CD4-positive, alpha-beta T cell (primary cell): ENCODE measurements at regions of chr18 and their contacts with region 1.

Region 1: GRCh38 chr18:76803814-76804213 is 18.5 kb upstream of the ZNF236 start:
- DNase-seq: peak; percentile 52 to 84 (median 68)
- ATAC-seq: peak; percentile 85
- H3K4me3 ChIP-seq: no peak overlapping the region
- H3K4me3 Mint-ChIP-seq: no peak overlapping the region
- H3K27ac ChIP-seq: no peak overlapping the region
- H3K27ac Mint-ChIP-seq: no peak overlapping the region
- H3K4me1 ChIP-seq: peaks cover 18% of the 10 kb centered on the region
- H3K4me1 Mint-ChIP-seq: peaks cover 15% of the 10 kb centered on the region
- H3K27me3 ChIP-seq: peaks cover 0 to 10% of the 10 kb centered on the region in 2 experiments
- H3K27me3 Mint-ChIP-seq: peaks cover 7% of the 10 kb centered on the region
- CTCF ChIP-seq: peak; percentile 87

Region 2: GRCh38 chr18:76398896-76399612 is 404.8 kb before region 1 on chr18:
- CTCF ChIA-PET with region 1: no interaction called
- POLR2A ChIA-PET with region 1: interaction called, 3 read pairs
- intact Hi-C with region 1: loop called in 1 of 2 experiments (anchors 5 kb)
- DNase-seq: peak; percentile 57 to 87 (median 72)
- ATAC-seq: peak; percentile 94
- H3K4me3 ChIP-seq: no peak overlapping the region
- H3K4me3 Mint-ChIP-seq: no peak overlapping the region
- H3K27ac ChIP-seq: no peak overlapping the region
- H3K27ac Mint-ChIP-seq: no peak overlapping the region
- H3K4me1 ChIP-seq: peaks cover 6% of the 10 kb centered on the region
- H3K4me1 Mint-ChIP-seq: peaks cover 26% of the 10 kb centered on the region
- H3K27me3 ChIP-seq: no peaks in the 10 kb centered on the region
- H3K27me3 Mint-ChIP-seq: no peaks in the 10 kb centered on the region
- CTCF ChIP-seq: peak; percentile 97

Region 3: DNA sequence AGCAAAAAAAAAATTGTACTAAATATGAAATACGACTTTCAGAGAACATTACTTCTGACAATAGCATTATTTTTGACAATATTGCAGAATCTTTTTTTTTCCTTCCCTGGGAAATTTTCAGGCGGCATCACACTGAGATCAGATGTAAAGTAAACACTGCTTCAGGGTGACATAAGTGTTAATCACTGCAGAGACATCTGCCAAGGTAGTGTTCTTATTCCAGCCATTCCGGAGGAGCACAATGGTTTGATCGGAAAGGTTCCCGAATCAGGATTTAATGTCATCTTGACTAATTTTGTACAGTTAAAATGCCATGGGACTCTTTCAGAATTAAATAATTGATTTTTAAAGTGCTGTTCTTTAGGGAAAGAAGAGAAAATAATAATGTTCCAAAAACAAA is 38.2 kb before region 1 on chr18:
- CTCF ChIA-PET with region 1: no interaction called
- POLR2A ChIA-PET with region 1: no interaction called
- intact Hi-C with region 1: no loop called
- DNase-seq: no peak
- ATAC-seq: no peak
- H3K4me3 ChIP-seq: no peak overlapping the region
- H3K4me3 Mint-ChIP-seq: no peak overlapping the region
- H3K27ac ChIP-seq: no peak overlapping the region
- H3K27ac Mint-ChIP-seq: no peak overlapping the region
- H3K4me1 ChIP-seq: peaks cover 13% of the 10 kb centered on the region
- H3K4me1 Mint-ChIP-seq: peaks cover 19% of the 10 kb centered on the region
- H3K27me3 ChIP-seq: peaks cover 0 to 4% of the 10 kb centered on the region in 2 experiments
- H3K27me3 Mint-ChIP-seq: peaks cover 5% of the 10 kb centered on the region
- CTCF ChIP-seq: no peak

Region 4: DNA sequence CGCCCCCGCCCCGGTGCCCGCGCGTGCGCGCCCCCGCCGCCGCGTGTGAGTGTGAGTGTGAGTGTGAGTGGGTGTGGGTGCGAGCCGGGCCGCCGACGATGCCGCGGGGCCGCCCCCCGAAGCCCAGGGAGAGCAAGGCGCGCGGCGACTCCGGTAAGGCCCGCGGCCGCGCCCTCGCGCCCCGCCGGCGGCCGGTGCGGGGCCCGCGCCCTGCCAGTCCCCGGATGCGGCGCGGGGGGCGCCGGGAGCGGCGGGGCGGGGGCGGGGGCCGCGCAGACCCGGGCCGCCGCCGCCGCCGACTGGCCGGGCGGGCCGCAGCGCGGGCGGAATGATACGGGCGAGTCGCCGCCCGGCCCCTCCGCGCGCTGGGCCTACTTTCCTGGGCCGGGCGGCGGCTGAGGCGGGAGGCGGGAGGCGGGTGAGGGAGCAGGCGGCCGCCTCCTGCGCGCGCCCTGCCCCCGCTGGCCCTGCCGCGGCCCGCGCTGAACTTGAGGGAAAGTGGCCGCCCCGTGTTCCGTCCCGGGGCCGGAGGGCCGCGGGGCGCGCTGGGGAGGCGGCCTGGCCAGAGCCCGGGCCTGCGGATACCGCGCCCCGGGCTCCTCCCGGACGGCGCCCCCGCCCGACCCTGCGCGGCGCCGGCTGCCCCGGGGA is 18.8 kb after region 1 on chr18 and contains the start of gene ZNF236:
- CTCF ChIA-PET with region 1: interaction called, 27 read pairs
- POLR2A ChIA-PET with region 1: interaction called, 12 read pairs
- intact Hi-C with region 1: loop called in 1 of 2 experiments (anchors 2 kb)
- DNase-seq: peak; percentile 39 to 88 (median 62)
- ATAC-seq: peak; percentile 43
- H3K4me3 ChIP-seq: peak within 1 kb of the TSS; percentile 97
- H3K4me3 Mint-ChIP-seq: peak within 1 kb of the TSS; percentile 96
- H3K27ac ChIP-seq: peak within 1 kb of the TSS; percentile 90 to 91
- H3K27ac Mint-ChIP-seq: peak within 1 kb of the TSS; percentile 96
- H3K4me1 ChIP-seq: peaks cover 47% of the 10 kb centered on the region
- H3K4me1 Mint-ChIP-seq: peaks cover 62% of the 10 kb centered on the region
- H3K27me3 ChIP-seq: no peaks in the 10 kb centered on the region
- H3K27me3 Mint-ChIP-seq: no peaks in the 10 kb centered on the region
- CTCF ChIP-seq: no peak
- total RNA-seq, gene ZNF236: 25.7 to 27.9 TPM

Region 5: GRCh38 chr18:76953583-76954233 is 149.9 kb after region 1 on chr18:
- CTCF ChIA-PET with region 1: no interaction called
- POLR2A ChIA-PET with region 1: no interaction called
- intact Hi-C with region 1: no loop called
- DNase-seq: no peak
- ATAC-seq: no peak
- H3K4me3 ChIP-seq: no peak overlapping the region
- H3K4me3 Mint-ChIP-seq: no peak overlapping the region
- H3K27ac ChIP-seq: no peak overlapping the region
- H3K27ac Mint-ChIP-seq: no peak overlapping the region
- H3K4me1 ChIP-seq: peaks cover 8% of the 10 kb centered on the region
- H3K4me1 Mint-ChIP-seq: peaks cover 10% of the 10 kb centered on the region
- H3K27me3 ChIP-seq: no peaks in the 10 kb centered on the region
- H3K27me3 Mint-ChIP-seq: no peaks in the 10 kb centered on the region
- CTCF ChIP-seq: no peak

Region 6: DNA sequence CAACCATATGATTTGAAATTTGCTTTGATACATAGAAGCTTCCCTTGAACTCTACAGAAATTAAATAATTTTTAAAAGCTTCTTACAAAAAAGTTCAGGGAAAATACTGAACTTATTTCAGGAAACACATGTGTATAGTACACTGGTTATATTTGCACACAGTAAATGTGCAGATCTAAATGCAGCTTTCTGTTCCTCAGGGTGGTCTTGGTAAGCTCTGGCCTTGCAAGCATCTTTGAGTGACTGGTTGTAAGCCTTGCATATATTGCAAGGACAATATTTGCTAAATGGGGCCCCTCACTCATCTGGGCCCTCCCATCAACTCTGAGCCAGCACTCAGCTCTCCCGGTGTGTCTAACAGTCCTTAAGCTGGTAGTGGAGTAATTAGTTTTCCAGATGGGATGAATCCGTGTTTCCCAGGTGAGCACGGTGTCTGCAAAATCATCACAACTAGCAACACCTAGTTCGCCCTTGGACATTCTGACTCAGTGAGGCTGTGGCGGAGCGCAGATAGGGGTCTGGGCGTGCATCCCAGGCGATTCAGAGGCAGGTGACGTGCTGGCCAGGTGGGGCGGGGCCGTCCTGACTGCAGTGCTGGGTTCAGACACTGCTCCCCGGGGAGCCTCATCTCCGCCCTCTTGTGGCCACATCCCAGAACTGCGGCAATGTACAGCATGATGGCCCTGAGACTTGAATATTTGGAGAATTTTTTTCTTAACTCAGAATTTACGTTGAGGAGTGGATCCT is 179.2 kb after region 1 on chr18:
- CTCF ChIA-PET with region 1: interaction called, 3 read pairs
- POLR2A ChIA-PET with region 1: interaction called, 4 read pairs
- intact Hi-C with region 1: loop called (anchors 2 kb)
- DNase-seq: peak; percentile 67 to 90 (median 82)
- ATAC-seq: peak; percentile 99
- H3K4me3 ChIP-seq: no peak overlapping the region
- H3K4me3 Mint-ChIP-seq: no peak overlapping the region
- H3K27ac ChIP-seq: no peak overlapping the region
- H3K27ac Mint-ChIP-seq: no peak overlapping the region
- H3K4me1 ChIP-seq: peaks cover 9% of the 10 kb centered on the region
- H3K4me1 Mint-ChIP-seq: no peaks in the 10 kb centered on the region
- H3K27me3 ChIP-seq: no peaks in the 10 kb centered on the region
- H3K27me3 Mint-ChIP-seq: no peaks in the 10 kb centered on the region
- CTCF ChIP-seq: peak; percentile 94

Region 7: DNA sequence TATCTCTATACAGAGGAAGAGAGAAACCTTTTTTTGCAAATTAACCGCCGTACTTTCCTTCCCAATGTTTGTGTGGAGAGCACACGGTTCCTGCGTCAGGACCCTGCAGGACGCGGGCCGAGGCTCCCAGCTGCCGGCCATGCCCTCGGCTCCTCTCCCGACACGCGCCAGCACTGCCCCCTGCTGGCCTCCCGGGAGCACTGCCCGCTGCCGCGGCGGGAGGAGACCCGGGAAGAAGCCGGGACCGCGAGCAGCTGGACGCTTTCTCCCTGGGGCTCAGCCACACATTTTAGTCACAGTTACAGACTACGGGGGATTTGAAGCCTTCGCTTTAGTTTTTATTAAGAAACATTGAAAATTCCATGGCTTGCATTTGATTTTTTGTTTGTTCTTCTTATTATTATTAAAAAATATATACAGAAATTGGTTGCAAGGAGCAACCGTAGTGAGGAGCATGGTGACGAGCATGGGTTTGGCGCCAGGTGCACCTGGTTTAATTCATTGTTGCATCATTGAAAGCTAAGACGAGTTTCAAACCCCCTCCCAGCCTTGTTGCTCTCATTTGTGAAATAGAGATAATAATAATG is 847.1 kb after region 1 on chr18:
- CTCF ChIA-PET with region 1: interaction called, 3 read pairs
- POLR2A ChIA-PET with region 1: no interaction called
- intact Hi-C with region 1: loop called in 1 of 2 experiments (anchors 5 kb)
- DNase-seq: peak in 13 of 14 experiments; percentile 15 to 66 (median 36)
- ATAC-seq: peak; percentile 44
- H3K4me3 ChIP-seq: no peak overlapping the region
- H3K4me3 Mint-ChIP-seq: no peak overlapping the region
- H3K27ac ChIP-seq: no peak overlapping the region
- H3K27ac Mint-ChIP-seq: no peak overlapping the region
- H3K4me1 ChIP-seq: peaks cover 5% of the 10 kb centered on the region
- H3K4me1 Mint-ChIP-seq: no peaks in the 10 kb centered on the region
- H3K27me3 ChIP-seq: peaks cover 6 to 14% of the 10 kb centered on the region in 2 experiments
- H3K27me3 Mint-ChIP-seq: peaks cover 24% of the 10 kb centered on the region
- CTCF ChIP-seq: peak; percentile 52